CD8-positive, alpha-beta memory T cell (primary cell): ENCODE measurements at regions of chr6 and their contacts with region 1.

Region 1: GRCh38 chr6:28863604-28864320 is 60.0 kb downstream of the TRIM27 start:
- DNase-seq: peak; percentile 55 to 90 (median 85)
- H3K4me3 ChIP-seq: peak overlapping the region; percentile 75
- H3K4me3 Mint-ChIP-seq: peak overlapping the region; percentile 91 to 96 (median 93)
- H3K27ac ChIP-seq: peak overlapping the region; percentile 78
- H3K27ac Mint-ChIP-seq: peak overlapping the region; percentile 75 to 96 (median 92)
- H3K4me1 ChIP-seq: peaks cover 24% of the 10 kb centered on the region
- H3K4me1 Mint-ChIP-seq: peaks cover 37 to 52% (median 42%) of the 10 kb centered on the region in 3 donors
- H3K27me3 ChIP-seq: no peaks in the 10 kb centered on the region
- H3K27me3 Mint-ChIP-seq: peaks cover 2 to 14% of the 10 kb centered on the region in 2 donors

Region 2: GRCh38 chr6:28824793-28825731 is 38.7 kb before region 1 on chr6:
- CTCF ChIA-PET with region 1: no interaction called
- POLR2A ChIA-PET with region 1: no interaction called
- DNase-seq: no peak
- H3K4me3 ChIP-seq: no peak overlapping the region
- H3K4me3 Mint-ChIP-seq: peak overlapping the region in 4 of 7 donors; percentile 4 to 65 (median 10)
- H3K27ac ChIP-seq: no peak overlapping the region
- H3K27ac Mint-ChIP-seq: peak overlapping the region in 2 of 8 donors; percentile 2
- H3K4me1 ChIP-seq: no peaks in the 10 kb centered on the region
- H3K4me1 Mint-ChIP-seq: peaks cover 8 to 12% (median 10%) of the 10 kb centered on the region in 3 donors
- H3K27me3 ChIP-seq: peaks cover 52% of the 10 kb centered on the region
- H3K27me3 Mint-ChIP-seq: peaks cover 74 to 89% of the 10 kb centered on the region in 2 donors

Region 3: DNA sequence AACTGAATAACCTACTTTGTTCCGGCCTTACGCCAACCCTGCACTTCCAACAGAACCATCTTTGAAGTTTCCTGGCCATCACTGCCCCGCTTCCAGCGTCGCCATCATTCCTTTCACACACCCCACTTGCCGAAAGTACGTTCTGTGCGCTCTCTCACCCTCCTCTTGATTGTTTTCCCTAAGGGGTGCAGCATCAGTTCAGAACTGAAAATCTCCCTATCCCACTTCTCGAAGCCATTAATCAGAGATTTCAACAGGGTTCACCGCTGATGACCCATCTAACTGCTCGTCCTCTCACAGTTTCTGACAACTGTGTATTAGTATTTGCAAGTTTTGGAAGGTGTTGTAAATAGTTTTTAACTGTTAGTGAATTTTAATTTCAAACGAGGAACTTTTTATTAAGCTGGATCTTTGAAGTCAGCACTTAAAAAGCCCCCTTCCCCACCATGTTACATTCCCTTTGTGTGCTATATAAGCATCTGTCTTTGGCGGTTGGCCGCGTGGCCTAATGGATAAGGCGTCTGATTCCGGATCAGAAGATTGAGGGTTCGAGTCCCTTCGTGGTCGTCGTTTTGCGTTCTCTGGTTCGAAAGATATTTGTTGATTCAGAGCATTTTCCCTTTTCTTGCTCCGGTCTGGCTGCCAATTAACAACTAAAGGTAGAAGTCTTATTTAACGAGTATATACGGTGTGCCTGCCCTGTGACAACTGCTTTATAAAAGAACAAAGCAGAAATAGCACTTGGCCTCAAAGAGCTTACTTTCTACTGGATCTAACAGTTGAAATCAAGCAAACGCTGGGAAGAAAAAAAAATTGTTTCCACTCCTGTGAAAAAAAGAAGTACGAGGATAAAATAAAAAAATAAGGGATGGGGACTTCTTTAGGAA is 17.4 kb after region 1 on chr6:
- CTCF ChIA-PET with region 1: interaction called, 27 read pairs
- POLR2A ChIA-PET with region 1: interaction called, 29 read pairs
- DNase-seq: peak in 3 of 5 donors; percentile 23 to 64 (median 55)
- H3K4me3 ChIP-seq: peak overlapping the region; percentile 25
- H3K4me3 Mint-ChIP-seq: peak overlapping the region; percentile 59 to 82 (median 74)
- H3K27ac ChIP-seq: no peak overlapping the region
- H3K27ac Mint-ChIP-seq: peak overlapping the region in 4 of 8 donors; percentile 66 to 87 (median 74)
- H3K4me1 ChIP-seq: peaks cover 34% of the 10 kb centered on the region
- H3K4me1 Mint-ChIP-seq: peaks cover 33 to 47% (median 38%) of the 10 kb centered on the region in 3 donors
- H3K27me3 ChIP-seq: no peaks in the 10 kb centered on the region
- H3K27me3 Mint-ChIP-seq: peaks cover 17% of the 10 kb centered on the region in 2 donors

Region 4: DNA sequence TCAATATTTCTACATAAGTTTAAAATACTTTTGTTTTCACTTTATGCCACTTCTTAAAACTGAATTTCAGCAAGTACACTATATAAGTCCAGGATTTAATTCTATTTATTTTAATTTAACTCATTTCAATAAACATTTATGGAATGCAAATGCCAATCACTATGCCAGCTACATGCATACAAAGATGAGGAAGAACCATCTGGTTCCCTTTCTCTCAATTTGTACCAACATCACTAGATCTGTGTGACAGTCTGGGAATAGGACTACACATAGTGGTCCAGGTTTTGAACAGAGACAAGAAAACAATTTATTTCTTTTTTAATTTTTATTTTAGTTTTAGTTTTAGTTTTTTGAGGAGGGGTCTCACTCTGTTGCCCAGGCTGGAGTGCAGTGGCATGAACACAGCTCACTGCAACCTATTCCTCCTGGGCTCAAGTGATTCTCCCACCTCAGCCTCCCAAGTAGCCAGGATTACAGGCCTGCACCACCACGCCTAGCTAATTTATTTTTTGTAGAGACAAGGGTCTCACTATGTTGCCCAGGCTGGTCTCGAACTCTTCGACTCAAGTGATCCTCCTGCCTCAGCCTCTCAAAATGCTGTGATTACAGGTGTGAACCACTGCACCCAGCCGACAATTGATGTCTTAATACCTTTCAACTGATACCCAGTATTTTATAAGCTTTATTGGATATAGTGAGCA is 24.2 kb after region 1 on chr6:
- CTCF ChIA-PET with region 1: interaction called, 27 read pairs
- POLR2A ChIA-PET with region 1: interaction called, 29 read pairs
- DNase-seq: no peak
- H3K4me3 ChIP-seq: no peak overlapping the region
- H3K4me3 Mint-ChIP-seq: no peak overlapping the region
- H3K27ac ChIP-seq: no peak overlapping the region
- H3K27ac Mint-ChIP-seq: no peak overlapping the region
- H3K4me1 ChIP-seq: peaks cover 27% of the 10 kb centered on the region
- H3K4me1 Mint-ChIP-seq: peaks cover 27 to 32% (median 28%) of the 10 kb centered on the region in 3 donors
- H3K27me3 ChIP-seq: no peaks in the 10 kb centered on the region
- H3K27me3 Mint-ChIP-seq: peaks cover 0 to 2% of the 10 kb centered on the region in 2 donors

Region 5: GRCh38 chr6:28923318-28924102 is 59.7 kb after region 1 on chr6 and contains the start of gene TRIM27:
- CTCF ChIA-PET with region 1: interaction called, 11 read pairs
- POLR2A ChIA-PET with region 1: interaction called, 8 read pairs
- DNase-seq: peak; percentile 73 to 85 (median 75)
- H3K4me3 ChIP-seq: peak within 1 kb of the TSS; percentile 59
- H3K4me3 Mint-ChIP-seq: peak within 1 kb of the TSS; percentile 90 to 98 (median 95)
- H3K27ac ChIP-seq: peak within 1 kb of the TSS; percentile 72
- H3K27ac Mint-ChIP-seq: peak within 1 kb of the TSS; percentile 87 to 97 (median 94)
- H3K4me1 ChIP-seq: peaks cover 42% of the 10 kb centered on the region
- H3K4me1 Mint-ChIP-seq: peaks cover 31 to 48% (median 44%) of the 10 kb centered on the region in 3 donors
- H3K27me3 ChIP-seq: no peaks in the 10 kb centered on the region
- H3K27me3 Mint-ChIP-seq: peaks cover 0 to 4% of the 10 kb centered on the region in 2 donors
- total RNA-seq, gene TRIM27: 67.7 to 69.2 TPM